ENCODE measurements at regions of chr1 and their contacts with region 1.

Region 1: GRCh38 chr1:176119549-176119948 is 87.5 kb downstream of the COP1 start:
- DNase-seq: no peak
- ATAC-seq: peak; percentile 92
- H3K4me3 ChIP-seq: no peak overlapping the region
- H3K27ac ChIP-seq: no peak overlapping the region
- H3K4me1 ChIP-seq: no peaks in the 10 kb centered on the region
- H3K27me3 ChIP-seq: no peaks in the 10 kb centered on the region
- CTCF ChIP-seq: peak; percentile 26 to 41 (median 40); a peak in 4 of 6 replicates
- EP300 ChIP-seq: no peak
- POLR2A ChIP-seq: no peak
- RAD21 ChIP-seq: peak; percentile 30; the same call in 1 of the 2 replicates

Region 2: GRCh38 chr1:176206961-176207902 is 87.7 kb after region 1 on chr1 and contains the start of gene COP1:
- CTCF ChIA-PET with region 1: interaction called, 5 read pairs
- POLR2A ChIA-PET with region 1: no interaction called
- RAD21 ChIA-PET with region 1: no interaction called
- SMC1A ChIA-PET with region 1: interaction called, 4 read pairs
- in situ Hi-C with region 1: no loop called
- intact Hi-C with region 1: loop called (anchors 2 kb)
- DNase-seq: peak; percentile 96
- ATAC-seq: peak; percentile 89
- H3K4me3 ChIP-seq: peak within 1 kb of the TSS; percentile 69
- H3K27ac ChIP-seq: peak within 1 kb of the TSS; percentile 90
- H3K4me1 ChIP-seq: peaks cover 7% of the 10 kb centered on the region; the same call in 1 of the 2 replicates
- H3K27me3 ChIP-seq: no peaks in the 10 kb centered on the region
- CTCF ChIP-seq: 0 out of 6 replicates have a peak, but pooled peaks of 1 of the 3 experiments have one; percentile 1
- EP300 ChIP-seq: peak in 1 of 2 experiments; percentile 46; a peak in 1 of 4 replicates
- POLR2A ChIP-seq: peak; percentile 98
- RAD21 ChIP-seq: no peak
- polyA plus RNA-seq, gene COP1: 17.7 to 31.5 TPM

Region 3: DNA sequence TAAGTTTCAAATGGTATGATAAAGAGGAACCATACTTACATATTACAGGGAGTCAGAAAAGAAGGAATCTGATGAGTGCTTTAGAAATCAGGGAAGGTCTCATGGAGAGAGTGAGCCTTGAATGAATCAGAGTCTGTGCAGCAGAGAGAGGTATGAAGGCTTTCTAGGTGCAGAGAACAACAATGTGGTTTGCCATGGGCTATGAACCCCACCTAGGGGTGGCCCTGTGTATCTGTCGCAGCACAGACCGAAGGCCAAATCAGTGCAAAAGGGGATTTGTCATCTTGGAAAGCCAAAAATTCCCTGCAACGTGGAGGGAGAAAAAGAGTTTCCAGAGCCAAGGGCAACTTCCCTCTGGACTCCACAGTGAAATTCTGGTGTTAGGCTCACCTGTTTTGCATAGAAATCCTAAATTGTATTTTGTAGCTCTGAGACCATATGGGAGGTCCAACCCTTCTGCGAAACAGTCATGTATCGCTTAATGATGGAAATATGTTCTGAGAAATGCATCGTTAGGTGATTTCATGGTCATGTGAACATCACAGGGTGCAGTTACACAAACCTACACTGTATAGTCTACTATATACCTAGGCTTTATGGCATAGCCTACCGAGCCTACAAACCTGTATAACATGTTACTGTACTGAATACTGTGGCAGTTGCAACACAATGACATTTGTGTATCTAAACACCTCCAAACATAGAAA is 347.1 kb after region 1 on chr1:
- CTCF ChIA-PET with region 1: no interaction called
- POLR2A ChIA-PET with region 1: no interaction called
- RAD21 ChIA-PET with region 1: no interaction called
- SMC1A ChIA-PET with region 1: no interaction called
- in situ Hi-C with region 1: no loop called
- intact Hi-C with region 1: loop called (anchors 10 kb)
- DNase-seq: no peak
- ATAC-seq: peak; percentile 81
- H3K4me3 ChIP-seq: no peak overlapping the region
- H3K27ac ChIP-seq: no peak overlapping the region
- H3K4me1 ChIP-seq: no peaks in the 10 kb centered on the region
- H3K27me3 ChIP-seq: no peaks in the 10 kb centered on the region
- CTCF ChIP-seq: peak; percentile 40 to 56 (median 51)
- EP300 ChIP-seq: no peak
- POLR2A ChIP-seq: no peak
- RAD21 ChIP-seq: peak; percentile 47